Activated T-helper 2 cell treated with anti-CD3 and anti-CD28 coated beads, Interferon-gamma antibody, Interleukin-2, Interleukin-4, amounts not matched to agents 10 μg/mL and 5 μg/mL and 100 μg/mL, durations not matched to agents 14 hours and 24 hours and 36 hours (primary cell): ENCODE measurements at regions of chr3 and their contacts with region 1.

Region 1: DNA sequence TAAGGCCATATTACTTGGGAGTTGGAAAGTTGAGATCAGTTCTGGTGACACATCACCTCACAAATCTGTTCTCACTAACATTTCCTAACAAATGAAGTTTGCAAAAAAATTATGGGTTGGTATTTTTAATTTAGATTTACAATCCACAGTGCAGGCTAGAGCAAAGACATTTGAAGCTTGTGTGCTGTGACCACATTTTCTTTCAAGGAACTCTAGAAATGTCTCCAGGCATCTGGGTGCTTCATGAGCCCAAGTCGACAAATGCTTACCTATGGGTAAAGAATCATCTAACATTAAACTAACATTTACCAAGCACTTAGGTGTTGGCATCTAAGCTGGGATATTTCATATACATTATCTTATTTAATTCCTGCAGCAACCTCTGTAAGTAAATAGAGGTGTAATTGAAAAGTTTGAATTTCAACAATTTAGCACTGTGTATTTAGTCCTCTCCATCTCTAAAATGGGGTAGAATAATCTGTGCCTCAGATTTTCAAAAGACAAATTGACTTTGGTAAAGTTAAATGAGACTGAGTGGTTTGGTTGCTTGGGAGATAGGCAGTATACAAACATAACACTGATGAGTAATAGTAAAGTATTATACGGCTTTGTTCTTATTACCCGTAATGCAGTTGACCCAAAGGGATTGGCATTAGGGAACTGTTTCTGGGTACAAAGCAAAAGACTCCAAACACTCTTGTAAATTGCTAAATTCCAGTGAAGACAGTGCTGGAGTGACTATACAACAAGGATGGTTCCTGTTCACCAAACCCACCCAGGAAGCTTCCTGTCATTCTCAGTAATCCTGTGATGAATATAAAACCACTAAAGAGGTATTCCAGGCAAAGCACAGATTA is 162.5 kb downstream of the TPRG1 start:
- DNase-seq: no peak
- H3K4me3 Mint-ChIP-seq: no peak overlapping the region
- H3K27ac Mint-ChIP-seq: peak overlapping the region; percentile 68
- H3K4me1 Mint-ChIP-seq: peaks cover 58% of the 10 kb centered on the region
- H3K27me3 Mint-ChIP-seq: no peaks in the 10 kb centered on the region

Region 2: GRCh38 chr3:189355481-189356201 is 21.3 kb after region 1 on chr3:
- intact Hi-C with region 1: loop called (anchors 2 kb)
- DNase-seq: peak; percentile 34
- H3K4me3 Mint-ChIP-seq: peak overlapping the region; percentile 24
- H3K27ac Mint-ChIP-seq: peak overlapping the region; percentile 83
- H3K4me1 Mint-ChIP-seq: peaks cover 35% of the 10 kb centered on the region
- H3K27me3 Mint-ChIP-seq: no peaks in the 10 kb centered on the region

Region 3: DNA sequence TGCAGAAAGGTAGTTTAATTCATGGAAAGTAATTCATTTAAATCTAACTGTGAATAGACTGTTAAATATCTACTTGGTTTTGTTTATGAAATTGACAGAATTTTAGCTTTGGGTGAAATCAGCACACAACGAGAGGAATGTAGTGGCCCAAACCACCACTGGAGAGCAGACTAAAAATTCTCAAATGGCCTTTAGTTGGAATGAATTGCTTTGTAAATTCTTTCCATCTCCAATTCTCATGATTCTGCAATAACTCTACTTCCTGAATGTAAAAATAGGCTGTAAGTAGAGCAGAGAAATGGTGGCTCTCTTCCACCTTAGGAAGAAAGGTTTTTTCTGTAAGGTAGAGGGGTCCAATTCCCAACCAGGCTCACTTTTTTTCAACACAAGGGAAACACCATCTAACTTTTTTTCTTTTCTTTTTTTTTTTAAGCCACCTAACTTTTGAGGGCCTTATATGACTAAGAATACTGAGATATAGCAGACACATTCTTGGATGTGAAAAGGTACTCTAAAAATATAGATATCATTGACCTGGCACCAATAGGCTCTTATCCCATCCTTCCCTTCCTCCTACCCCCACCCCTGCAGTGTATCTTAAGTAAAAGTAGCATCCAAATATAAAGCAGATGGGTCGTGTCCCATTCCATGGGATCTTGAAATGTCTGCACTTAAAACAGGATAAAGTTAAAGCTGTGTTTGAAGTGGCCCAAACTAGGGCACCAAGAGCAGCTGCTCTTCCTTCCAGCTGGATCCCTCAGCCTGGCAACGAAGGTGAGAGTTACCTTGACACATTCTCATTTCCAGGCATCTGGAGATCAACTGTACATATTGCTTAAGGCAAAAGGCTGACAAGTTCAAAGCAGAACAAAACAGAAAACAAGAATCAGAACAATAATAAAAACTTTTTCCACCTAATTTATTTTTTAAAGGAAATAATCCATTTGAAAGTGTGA is 31.6 kb after region 1 on chr3:
- intact Hi-C with region 1: loop called (anchors 5 kb)
- DNase-seq: no peak
- H3K4me3 Mint-ChIP-seq: no peak overlapping the region
- H3K27ac Mint-ChIP-seq: no peak overlapping the region
- H3K4me1 Mint-ChIP-seq: peaks cover 47% of the 10 kb centered on the region
- H3K27me3 Mint-ChIP-seq: no peaks in the 10 kb centered on the region

Region 4: DNA sequence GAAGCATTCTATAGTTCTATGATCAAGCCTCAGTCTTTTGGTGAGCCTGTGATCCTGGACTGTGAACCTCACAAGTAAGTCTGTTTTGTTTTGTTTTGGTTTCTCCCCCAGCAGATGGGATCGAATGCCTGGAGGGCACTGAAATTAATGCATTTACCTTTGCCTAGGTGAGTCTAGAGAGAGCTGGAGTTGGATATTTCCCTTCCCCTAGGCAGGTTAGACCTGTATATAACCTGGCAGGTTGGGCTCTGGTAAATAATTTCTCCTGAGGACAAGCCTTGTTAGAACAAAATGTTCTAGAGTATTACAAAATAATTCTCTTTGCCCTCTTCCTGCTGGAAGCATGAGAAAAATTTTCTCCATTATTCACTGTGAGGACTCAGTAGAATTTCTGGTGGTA is 49.3 kb after region 1 on chr3:
- intact Hi-C with region 1: no loop called
- DNase-seq: no peak
- H3K4me3 Mint-ChIP-seq: no peak overlapping the region
- H3K27ac Mint-ChIP-seq: no peak overlapping the region
- H3K4me1 Mint-ChIP-seq: peaks cover 14% of the 10 kb centered on the region
- H3K27me3 Mint-ChIP-seq: no peaks in the 10 kb centered on the region

Region 5: GRCh38 chr3:189502676-189503257 is 168.5 kb after region 1 on chr3:
- intact Hi-C with region 1: loop called (anchors 1 kb)
- DNase-seq: no peak
- H3K4me3 Mint-ChIP-seq: no peak overlapping the region
- H3K27ac Mint-ChIP-seq: peak overlapping the region; percentile 30
- H3K4me1 Mint-ChIP-seq: peaks cover 41% of the 10 kb centered on the region
- H3K27me3 Mint-ChIP-seq: no peaks in the 10 kb centered on the region

Region 6: GRCh38 chr3:189570916-189571315 is 236.6 kb after region 1 on chr3:
- intact Hi-C with region 1: loop called (anchors 2 kb)
- DNase-seq: no peak
- H3K4me3 Mint-ChIP-seq: peak overlapping the region; percentile 9
- H3K27ac Mint-ChIP-seq: peak overlapping the region; percentile 20
- H3K4me1 Mint-ChIP-seq: peaks cover 70% of the 10 kb centered on the region
- H3K27me3 Mint-ChIP-seq: no peaks in the 10 kb centered on the region

Region 7: GRCh38 chr3:189641776-189642175 is 307.5 kb after region 1 on chr3:
- intact Hi-C with region 1: no loop called
- DNase-seq: no peak
- H3K4me3 Mint-ChIP-seq: no peak overlapping the region
- H3K27ac Mint-ChIP-seq: no peak overlapping the region
- H3K4me1 Mint-ChIP-seq: peaks cover 4% of the 10 kb centered on the region
- H3K27me3 Mint-ChIP-seq: peaks cover 4% of the 10 kb centered on the region

Region 8: DNA sequence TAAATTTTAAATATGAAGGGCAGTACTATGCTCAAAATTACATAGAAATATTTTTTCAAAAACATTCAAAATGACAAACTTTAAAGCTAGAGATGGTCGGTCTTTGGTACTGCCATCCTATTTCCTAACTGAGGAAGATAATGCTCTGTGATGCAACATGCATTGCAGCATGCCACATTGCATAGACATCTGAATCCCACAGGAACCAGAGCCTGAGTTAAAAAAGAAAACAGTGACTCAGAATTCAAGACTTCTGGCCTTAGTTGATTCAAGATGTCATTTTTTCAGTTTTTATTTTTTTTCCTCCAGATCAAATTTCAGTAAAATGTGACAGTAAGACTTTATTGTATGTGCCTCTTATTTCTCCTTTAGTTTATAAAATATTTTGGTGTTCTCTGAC is 330.0 kb after region 1 on chr3:
- intact Hi-C with region 1: no loop called
- DNase-seq: no peak
- H3K4me3 Mint-ChIP-seq: no peak overlapping the region
- H3K27ac Mint-ChIP-seq: no peak overlapping the region
- H3K4me1 Mint-ChIP-seq: peaks cover 6% of the 10 kb centered on the region
- H3K27me3 Mint-ChIP-seq: no peaks in the 10 kb centered on the region